Astrocyte of the cerebellum (primary cell): ENCODE measurements at regions of chr1 and their contacts with region 1.

Region 1: GRCh38 chr1:180502360-180503273 is at the start of gene ACBD6:
- DNase-seq: peak; percentile 54
- H3K4me3 ChIP-seq: peak within 1 kb of the TSS; percentile 91
- CTCF ChIP-seq: peak; percentile 16

Region 2: DNA sequence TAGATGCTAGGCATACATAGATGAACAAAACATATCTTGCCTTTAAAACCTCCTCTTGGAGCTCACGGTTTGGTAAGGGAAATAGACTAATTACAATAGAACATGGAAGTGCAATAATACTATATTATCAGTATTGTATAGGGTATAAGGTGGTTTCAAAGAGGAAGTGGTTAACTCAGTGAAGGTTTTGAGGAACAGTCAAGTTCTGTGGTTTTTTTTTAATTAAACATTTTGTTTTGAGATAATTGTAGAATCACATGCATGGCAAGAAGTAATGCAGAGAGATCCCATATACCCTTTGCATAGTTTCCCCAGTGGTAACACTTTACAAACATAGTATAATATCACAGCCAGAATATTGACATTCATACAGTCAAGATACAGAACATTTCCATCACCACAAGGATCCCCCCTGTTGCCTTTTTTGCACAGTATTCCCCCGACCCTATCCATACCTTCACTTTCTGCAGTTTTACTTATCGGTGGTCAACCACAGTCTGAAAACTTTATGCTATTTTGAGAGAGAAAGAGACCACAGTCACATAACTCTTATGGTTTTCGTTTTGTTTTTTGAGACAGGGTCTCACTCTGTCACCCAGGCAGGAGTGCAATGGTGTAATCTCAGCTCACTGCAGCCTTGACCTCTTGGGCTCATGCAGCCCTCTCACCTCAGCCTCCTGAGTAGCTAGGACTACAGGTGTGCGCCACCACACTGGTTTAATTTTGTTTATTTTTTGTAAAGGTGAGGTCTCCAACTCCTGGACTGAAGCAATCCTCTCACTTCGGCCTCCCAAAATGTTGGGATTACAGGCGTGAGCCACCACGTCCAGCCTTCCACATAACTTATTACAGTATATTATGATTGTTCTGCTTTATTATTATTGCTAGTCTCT is 349.6 kb after region 1 on chr1:
- in situ Hi-C with region 1: loop called (anchors 10 kb)
- DNase-seq: no peak
- H3K4me3 ChIP-seq: no peak overlapping the region
- CTCF ChIP-seq: no peak

Region 3: DNA sequence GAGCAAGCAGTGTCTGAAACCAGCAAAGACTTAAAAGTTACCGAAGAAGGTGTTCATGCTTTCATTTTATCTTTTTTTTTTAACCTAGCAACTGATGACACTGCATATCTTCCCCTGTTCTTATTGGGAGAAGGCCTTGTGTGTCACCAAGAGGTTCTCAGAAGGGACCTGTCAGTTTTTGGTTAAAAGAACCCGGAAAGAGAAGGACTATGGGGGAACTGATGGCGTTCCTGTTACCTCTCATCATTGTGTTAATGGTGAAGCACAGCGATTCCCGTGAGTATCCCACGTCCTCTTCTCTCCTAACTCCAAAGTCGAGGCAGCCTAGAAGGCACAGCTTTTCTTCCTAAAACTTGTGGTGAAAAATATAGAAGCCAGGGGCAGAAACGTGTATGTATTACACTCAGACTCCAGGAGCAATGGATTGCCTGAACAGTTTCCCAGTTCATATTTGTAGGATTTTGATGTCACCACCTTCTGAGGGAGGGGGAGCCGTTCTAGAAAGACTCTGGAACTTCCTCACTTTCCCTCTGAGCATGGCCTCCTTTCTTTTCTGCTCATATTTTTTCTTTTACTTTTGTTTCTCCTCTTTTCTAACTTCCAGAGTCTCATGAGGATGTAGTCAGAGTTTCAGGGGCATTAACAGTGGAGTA is 531.3 kb after region 1 on chr1 and contains the start of gene MR1:
- in situ Hi-C with region 1: loop called (anchors 25 kb)
- DNase-seq: peak; percentile 41
- H3K4me3 ChIP-seq: no peak within 1 kb of the TSS
- CTCF ChIP-seq: no peak

Region 4: DNA sequence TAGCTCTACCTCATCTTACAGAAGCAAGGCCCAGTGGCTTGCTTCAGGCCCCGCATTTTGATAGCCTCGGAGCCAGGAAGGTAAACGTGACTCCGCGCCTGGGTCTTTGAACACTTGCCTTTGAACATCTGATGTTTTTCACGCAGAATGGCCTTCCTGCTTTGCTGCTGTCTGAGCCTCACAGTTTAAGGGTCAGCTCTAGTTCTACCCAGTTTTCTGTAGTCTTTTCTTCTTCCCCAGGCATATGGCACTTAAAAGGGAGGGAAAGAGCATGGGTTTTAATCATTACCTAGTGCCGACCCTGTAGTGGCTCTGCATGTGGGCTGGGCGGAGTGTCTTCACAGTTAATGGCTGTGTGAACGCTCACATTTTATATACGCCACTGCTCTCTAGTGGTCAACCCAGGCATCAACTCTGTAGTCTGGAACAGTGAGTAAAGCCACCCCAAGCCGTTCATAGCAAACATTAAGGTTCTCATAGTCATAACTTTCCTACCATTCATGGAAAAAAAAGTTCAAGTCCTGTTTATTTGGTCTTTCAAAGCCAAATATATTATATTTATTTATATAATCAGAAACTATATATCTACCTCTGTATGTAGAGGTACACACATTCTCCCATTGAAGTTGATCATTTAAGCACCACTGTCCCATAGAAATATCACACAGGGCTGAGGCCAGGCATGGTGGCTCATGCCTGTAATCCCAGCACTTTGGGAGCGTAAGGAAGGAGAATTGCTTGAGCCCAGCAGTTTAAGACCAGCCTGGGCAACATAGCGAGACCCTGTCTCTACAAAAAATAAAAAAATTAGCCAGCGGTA is 664.0 kb after region 1 on chr1:
- in situ Hi-C with region 1: loop called (anchors 10 kb)
- DNase-seq: peak; percentile 52
- H3K4me3 ChIP-seq: no peak overlapping the region
- CTCF ChIP-seq: peak; percentile 85